Activated CD8-positive, alpha-beta T cell treated with anti-CD3 and anti-CD28 coated beads, Interleukin-2, amount 10 ng/mL, durations not matched to agents 7 days and 5 days (primary cell): ENCODE measurements at regions of chr1 and their contacts with region 1.

Region 1: DNA sequence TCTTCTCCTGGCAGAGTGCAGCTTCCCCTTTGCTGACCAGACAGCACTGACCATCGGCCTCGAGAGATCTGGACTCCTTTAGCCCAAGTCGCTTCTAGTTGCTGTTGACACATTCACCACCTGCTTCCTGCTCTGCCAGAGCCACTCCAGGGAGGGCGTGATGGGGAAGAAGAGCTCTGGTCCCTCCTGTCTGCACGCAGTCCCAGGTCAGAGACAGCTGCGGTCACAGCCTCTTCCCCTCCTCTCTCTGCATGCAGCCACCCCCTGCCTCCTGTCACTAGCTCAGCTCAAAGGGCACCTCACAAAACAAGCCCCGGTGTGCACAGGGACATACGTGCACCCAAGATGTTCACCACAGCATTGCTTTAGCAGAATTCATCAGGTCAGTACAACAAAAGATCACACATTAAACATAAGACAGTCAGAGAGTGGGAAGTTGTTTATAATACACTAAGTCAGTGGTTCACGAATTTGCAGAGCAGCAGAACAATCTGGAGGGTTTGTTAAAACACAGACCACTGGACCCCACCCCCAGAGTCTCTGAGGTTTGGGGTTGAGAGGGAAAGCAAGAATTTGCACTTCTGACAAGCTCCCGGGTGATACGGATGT is 132.9 kb downstream of the SYF2 start:
- DNase-seq: peak; percentile 79
- ATAC-seq: peak; percentile 62
- H3K4me3 Mint-ChIP-seq: peak overlapping the region; percentile 65
- H3K27ac Mint-ChIP-seq: peak overlapping the region; percentile 91
- H3K4me1 Mint-ChIP-seq: peaks cover 88% of the 10 kb centered on the region
- H3K27me3 Mint-ChIP-seq: peaks cover 8% of the 10 kb centered on the region

Region 2: DNA sequence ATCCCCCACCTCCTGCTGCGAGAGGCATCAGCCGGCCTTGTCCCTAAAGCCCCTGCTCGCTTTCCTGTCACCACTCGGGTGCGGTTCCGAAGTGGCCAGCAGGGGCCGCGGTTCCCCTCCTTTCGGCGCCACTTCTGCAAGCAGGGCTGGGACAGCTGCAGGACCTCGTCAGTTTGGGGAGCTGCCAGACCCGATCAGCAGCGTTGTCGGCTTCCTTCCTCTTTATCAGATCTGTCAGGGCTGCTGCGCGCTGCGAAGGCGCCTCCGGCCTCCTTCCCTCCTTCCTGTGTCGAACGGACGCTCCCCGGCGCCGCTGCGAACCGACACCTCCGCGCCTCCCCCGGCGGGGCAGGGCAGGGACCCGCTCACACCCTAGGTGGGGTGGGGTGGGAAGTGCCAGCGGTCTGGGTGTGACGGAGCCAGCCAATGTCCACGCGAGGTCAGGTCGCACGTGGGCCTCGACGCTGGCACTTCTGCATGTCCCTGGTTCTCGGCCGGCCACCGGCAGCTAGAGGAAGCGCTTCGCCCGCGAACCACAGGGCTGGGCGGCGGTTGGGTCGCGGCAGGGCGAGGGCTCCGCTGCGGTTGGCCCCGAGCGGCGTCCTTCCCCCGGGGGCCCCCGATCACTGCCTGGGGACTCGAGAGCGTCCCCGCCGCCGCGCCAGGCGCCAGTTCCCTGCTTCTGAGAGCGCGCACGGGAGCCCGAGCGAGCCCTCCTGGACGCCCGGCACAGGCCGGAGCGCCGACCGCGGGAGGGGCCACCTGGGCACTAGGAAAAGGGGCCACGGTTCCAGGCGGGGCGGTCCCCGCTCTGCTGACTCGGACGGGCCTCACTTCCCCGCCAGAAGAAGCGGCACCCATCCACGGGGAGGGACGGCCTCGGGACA is 251.2 kb before region 1 on chr1:
- CTCF ChIA-PET with region 1: interaction called, 46 read pairs
- POLR2A ChIA-PET with region 1: no interaction called
- DNase-seq: peak; percentile 94
- ATAC-seq: peak; percentile 98
- H3K4me3 Mint-ChIP-seq: peak overlapping the region; percentile 56
- H3K27ac Mint-ChIP-seq: peak overlapping the region; percentile 70
- H3K4me1 Mint-ChIP-seq: peaks cover 24% of the 10 kb centered on the region
- H3K27me3 Mint-ChIP-seq: peaks cover 47% of the 10 kb centered on the region

Region 3: GRCh38 chr1:24955161-24955560 is 144.3 kb before region 1 on chr1:
- CTCF ChIA-PET with region 1: interaction called, 109 read pairs
- POLR2A ChIA-PET with region 1: interaction called, 5 read pairs
- DNase-seq: peak; percentile 90
- ATAC-seq: peak; percentile 81
- H3K4me3 Mint-ChIP-seq: peak overlapping the region; percentile 73
- H3K27ac Mint-ChIP-seq: peak overlapping the region; percentile 94
- H3K4me1 Mint-ChIP-seq: peaks cover 95% of the 10 kb centered on the region
- H3K27me3 Mint-ChIP-seq: no peaks in the 10 kb centered on the region

Region 4: DNA sequence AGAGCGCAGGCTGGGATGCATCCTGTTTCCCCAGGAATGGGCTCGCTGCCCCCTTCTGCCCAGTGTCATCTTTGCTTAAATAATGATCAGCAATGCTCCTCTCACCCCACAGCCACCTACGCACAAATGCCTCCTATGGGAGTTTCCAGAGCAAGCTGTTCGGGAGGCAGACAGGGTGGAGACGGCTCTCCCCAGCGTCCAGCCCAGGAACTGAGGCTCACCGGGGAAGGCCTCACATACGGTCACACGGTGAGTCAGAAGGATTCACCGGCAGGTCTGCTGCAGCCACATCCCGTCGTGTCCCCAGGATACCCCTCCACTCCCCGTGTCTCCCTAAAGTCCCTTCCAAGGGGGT is 129.1 kb before region 1 on chr1:
- CTCF ChIA-PET with region 1: interaction called, 109 read pairs
- POLR2A ChIA-PET with region 1: interaction called, 23 read pairs
- DNase-seq: no peak
- ATAC-seq: no peak
- H3K4me3 Mint-ChIP-seq: peak overlapping the region; percentile 66
- H3K27ac Mint-ChIP-seq: peak overlapping the region; percentile 90
- H3K4me1 Mint-ChIP-seq: peaks cover 87% of the 10 kb centered on the region
- H3K27me3 Mint-ChIP-seq: no peaks in the 10 kb centered on the region

Region 5: GRCh38 chr1:25042331-25043227 is 56.9 kb before region 1 on chr1:
- CTCF ChIA-PET with region 1: interaction called, 94 read pairs
- POLR2A ChIA-PET with region 1: interaction called, 3 read pairs
- DNase-seq: no peak
- ATAC-seq: no peak
- H3K4me3 Mint-ChIP-seq: no peak overlapping the region
- H3K27ac Mint-ChIP-seq: no peak overlapping the region
- H3K4me1 Mint-ChIP-seq: peaks cover 25% of the 10 kb centered on the region
- H3K27me3 Mint-ChIP-seq: peaks cover 7% of the 10 kb centered on the region

Region 6: DNA sequence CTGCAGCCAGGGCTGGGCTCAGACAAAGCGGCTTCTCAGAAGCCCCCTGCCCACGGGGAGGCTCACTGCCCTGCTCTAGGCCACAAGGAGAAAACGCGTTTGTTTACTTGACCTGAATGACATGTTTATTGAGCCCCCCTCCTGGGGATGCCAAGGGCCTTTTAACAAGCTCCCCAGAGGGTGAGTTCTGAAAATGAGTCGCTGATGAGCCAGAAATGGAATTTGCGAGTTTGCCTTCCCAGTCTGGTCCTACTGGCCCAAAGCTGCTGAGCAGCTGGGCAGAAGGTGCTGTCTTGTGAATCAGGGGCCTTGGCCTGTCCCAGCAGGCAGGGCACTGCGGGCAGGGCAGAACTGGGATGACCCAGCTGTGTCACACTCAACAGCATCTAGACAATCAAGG is 12.3 kb after region 1 on chr1:
- CTCF ChIA-PET with region 1: interaction called, 15 read pairs
- POLR2A ChIA-PET with region 1: no interaction called
- DNase-seq: no peak
- ATAC-seq: no peak
- H3K4me3 Mint-ChIP-seq: no peak overlapping the region
- H3K27ac Mint-ChIP-seq: no peak overlapping the region
- H3K4me1 Mint-ChIP-seq: peaks cover 23% of the 10 kb centered on the region
- H3K27me3 Mint-ChIP-seq: peaks cover 20% of the 10 kb centered on the region

Region 7: GRCh38 chr1:25216123-25216522 is 116.7 kb after region 1 on chr1:
- CTCF ChIA-PET with region 1: no interaction called
- POLR2A ChIA-PET with region 1: no interaction called
- DNase-seq: no peak
- ATAC-seq: no peak
- H3K4me3 Mint-ChIP-seq: no peak overlapping the region
- H3K27ac Mint-ChIP-seq: no peak overlapping the region
- H3K4me1 Mint-ChIP-seq: no peaks in the 10 kb centered on the region
- H3K27me3 Mint-ChIP-seq: peaks cover 3% of the 10 kb centered on the region